ENCODE measurements at regions of chr12 and their contacts with region 1.

Region 1: GRCh38 chr12:109597795-109598427 is 24.3 kb downstream of the MVK start:
- DNase-seq: peak; percentile 80
- H3K4me3 Mint-ChIP-seq: no peak overlapping the region
- H3K27ac Mint-ChIP-seq: no peak overlapping the region
- H3K4me1 Mint-ChIP-seq: peaks cover 8% of the 10 kb centered on the region
- H3K27me3 Mint-ChIP-seq: no peaks in the 10 kb centered on the region
- CTCF ChIP-seq: peak; percentile 89

Region 2: GRCh38 chr12:109346920-109347319 is 251.0 kb before region 1 on chr12:
- CTCF ChIA-PET with region 1: no interaction called
- POLR2A ChIA-PET with region 1: no interaction called
- intact Hi-C with region 1: no loop called
- DNase-seq: no peak
- H3K4me3 Mint-ChIP-seq: no peak overlapping the region
- H3K27ac Mint-ChIP-seq: no peak overlapping the region
- H3K4me1 Mint-ChIP-seq: no peaks in the 10 kb centered on the region
- H3K27me3 Mint-ChIP-seq: peaks cover 55% of the 10 kb centered on the region
- CTCF ChIP-seq: no peak

Region 3: GRCh38 chr12:109567967-109568366 is 29.9 kb before region 1 on chr12:
- CTCF ChIA-PET with region 1: interaction called, 11 read pairs
- POLR2A ChIA-PET with region 1: interaction called, 17 read pairs
- intact Hi-C with region 1: no loop called
- DNase-seq: no peak
- H3K4me3 Mint-ChIP-seq: no peak overlapping the region
- H3K27ac Mint-ChIP-seq: no peak overlapping the region
- H3K4me1 Mint-ChIP-seq: peaks cover 6% of the 10 kb centered on the region
- H3K27me3 Mint-ChIP-seq: no peaks in the 10 kb centered on the region
- CTCF ChIP-seq: no peak

Region 4: DNA sequence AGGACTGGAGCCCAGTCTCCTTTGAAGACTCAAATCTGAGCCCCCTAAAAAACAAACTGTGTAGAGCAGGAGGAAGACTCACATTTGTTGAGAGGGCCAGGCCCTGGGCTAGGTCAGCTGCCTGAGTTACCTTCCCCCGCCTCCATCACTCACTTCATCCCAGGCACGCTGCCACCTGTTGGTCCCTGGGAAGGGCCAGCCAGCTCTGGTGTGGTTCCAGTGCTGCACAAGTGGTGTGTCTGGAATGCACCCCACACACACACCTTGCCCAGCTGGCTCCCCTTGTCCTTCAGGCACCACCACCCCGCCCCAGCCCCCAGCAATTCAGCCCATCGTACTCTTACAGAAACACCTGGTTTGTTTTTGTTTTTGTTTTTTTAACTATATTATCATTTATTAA is 15.3 kb before region 1 on chr12:
- CTCF ChIA-PET with region 1: interaction called, 33 read pairs
- POLR2A ChIA-PET with region 1: interaction called, 6 read pairs
- intact Hi-C with region 1: no loop called
- DNase-seq: peak; percentile 35
- H3K4me3 Mint-ChIP-seq: peak overlapping the region; percentile 59
- H3K27ac Mint-ChIP-seq: peak overlapping the region; percentile 92
- H3K4me1 Mint-ChIP-seq: peaks cover 14% of the 10 kb centered on the region
- H3K27me3 Mint-ChIP-seq: no peaks in the 10 kb centered on the region
- CTCF ChIP-seq: no peak

Region 5: GRCh38 chr12:109713187-109713984 is 115.5 kb after region 1 on chr12 and contains the start of gene FAM222A:
- CTCF ChIA-PET with region 1: interaction called, 9 read pairs
- POLR2A ChIA-PET with region 1: no interaction called
- intact Hi-C with region 1: loop called (anchors 5 kb)
- DNase-seq: peak; percentile 91
- H3K4me3 Mint-ChIP-seq: peak within 1 kb of the TSS; percentile 58
- H3K27ac Mint-ChIP-seq: no peak within 1 kb of the TSS
- H3K4me1 Mint-ChIP-seq: no peaks in the 10 kb centered on the region
- H3K27me3 Mint-ChIP-seq: no peaks in the 10 kb centered on the region
- CTCF ChIP-seq: no peak
- total RNA-seq, gene FAM222A: 0.19 and 0.29 TPM in 2 replicates

Region 6: GRCh38 chr12:109844983-109845823 is 247.3 kb after region 1 on chr12:
- CTCF ChIA-PET with region 1: interaction called, 9 read pairs
- POLR2A ChIA-PET with region 1: no interaction called
- intact Hi-C with region 1: loop called (anchors 1 kb)
- DNase-seq: peak; percentile 82
- H3K4me3 Mint-ChIP-seq: no peak overlapping the region
- H3K27ac Mint-ChIP-seq: no peak overlapping the region
- H3K4me1 Mint-ChIP-seq: no peaks in the 10 kb centered on the region
- H3K27me3 Mint-ChIP-seq: no peaks in the 10 kb centered on the region
- CTCF ChIP-seq: peak; percentile 97

Measured in MCF 10A (cell line).